T-cell (primary cell): ENCODE measurements at regions of chr10 and their contacts with region 1.

Region 1: GRCh38 chr10:30639946-30640786 is 10.6 kb upstream of the LYZL2 start:
- DNase-seq: peak in 4 of 35 experiments; percentile 4 to 76 (median 8)
- ATAC-seq: peak in 1 of 4 experiments; percentile 28
- H3K4me3 ChIP-seq: no peak overlapping the region
- H3K4me3 Mint-ChIP-seq: no peak overlapping the region
- H3K27ac ChIP-seq: no peak overlapping the region
- H3K27ac Mint-ChIP-seq: no peak overlapping the region
- H3K4me1 ChIP-seq: no peaks in the 10 kb centered on the region
- H3K4me1 Mint-ChIP-seq: peaks cover 0 to 3% (median 0%) of the 10 kb centered on the region in 3 donors
- H3K27me3 ChIP-seq: peaks cover 5 to 6% of the 10 kb centered on the region in 2 experiments
- H3K27me3 Mint-ChIP-seq: peaks cover 37 to 38% of the 10 kb centered on the region in 2 donors

Region 2: GRCh38 chr10:30583778-30584415 is 56.3 kb before region 1 on chr10:
- CTCF ChIA-PET with region 1: interaction called in 1 of 2 experiments, 10 read pairs
- POLR2A ChIA-PET with region 1: no interaction called
- DNase-seq: peak in 2 of 35 experiments; percentile 9 to 10
- ATAC-seq: no peak
- H3K4me3 ChIP-seq: peak overlapping the region in 1 of 2 donors; percentile 13
- H3K4me3 Mint-ChIP-seq: peak overlapping the region; percentile 51 to 72 (median 56)
- H3K27ac ChIP-seq: no peak overlapping the region
- H3K27ac Mint-ChIP-seq: no peak overlapping the region
- H3K4me1 ChIP-seq: peaks cover 0 to 8% of the 10 kb centered on the region in 2 experiments
- H3K4me1 Mint-ChIP-seq: peaks cover 5 to 10% (median 5%) of the 10 kb centered on the region in 3 donors
- H3K27me3 ChIP-seq: peaks cover 0 to 10% of the 10 kb centered on the region in 2 experiments
- H3K27me3 Mint-ChIP-seq: peaks cover 8 to 9% of the 10 kb centered on the region in 2 donors

Region 3: DNA sequence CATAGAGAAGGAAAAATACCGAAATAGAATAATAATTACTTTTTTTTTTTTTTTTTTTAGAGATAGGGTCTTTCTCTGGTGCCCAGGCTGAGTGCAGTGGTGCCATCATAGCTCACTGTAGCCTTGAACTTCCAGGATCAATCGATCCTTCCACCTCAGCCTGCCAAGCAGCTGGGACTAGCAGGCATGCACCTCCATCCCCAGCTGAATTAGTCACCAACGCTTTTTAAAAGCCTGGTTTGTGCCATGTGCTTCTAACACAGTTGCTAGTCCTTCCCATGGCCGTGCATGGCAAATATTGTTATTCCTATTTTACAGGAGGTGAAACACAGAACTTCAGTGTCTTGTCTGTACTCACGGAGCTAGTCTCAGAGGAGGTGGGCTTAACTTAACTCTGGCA is 33.9 kb before region 1 on chr10:
- CTCF ChIA-PET with region 1: no interaction called
- POLR2A ChIA-PET with region 1: no interaction called
- DNase-seq: no peak
- ATAC-seq: no peak
- H3K4me3 ChIP-seq: no peak overlapping the region
- H3K4me3 Mint-ChIP-seq: no peak overlapping the region
- H3K27ac ChIP-seq: no peak overlapping the region
- H3K27ac Mint-ChIP-seq: no peak overlapping the region
- H3K4me1 ChIP-seq: no peaks in the 10 kb centered on the region
- H3K4me1 Mint-ChIP-seq: no peaks in the 10 kb centered on the region
- H3K27me3 ChIP-seq: peaks cover 0 to 23% of the 10 kb centered on the region in 2 experiments
- H3K27me3 Mint-ChIP-seq: peaks cover 26 to 41% of the 10 kb centered on the region in 2 donors

Region 4: DNA sequence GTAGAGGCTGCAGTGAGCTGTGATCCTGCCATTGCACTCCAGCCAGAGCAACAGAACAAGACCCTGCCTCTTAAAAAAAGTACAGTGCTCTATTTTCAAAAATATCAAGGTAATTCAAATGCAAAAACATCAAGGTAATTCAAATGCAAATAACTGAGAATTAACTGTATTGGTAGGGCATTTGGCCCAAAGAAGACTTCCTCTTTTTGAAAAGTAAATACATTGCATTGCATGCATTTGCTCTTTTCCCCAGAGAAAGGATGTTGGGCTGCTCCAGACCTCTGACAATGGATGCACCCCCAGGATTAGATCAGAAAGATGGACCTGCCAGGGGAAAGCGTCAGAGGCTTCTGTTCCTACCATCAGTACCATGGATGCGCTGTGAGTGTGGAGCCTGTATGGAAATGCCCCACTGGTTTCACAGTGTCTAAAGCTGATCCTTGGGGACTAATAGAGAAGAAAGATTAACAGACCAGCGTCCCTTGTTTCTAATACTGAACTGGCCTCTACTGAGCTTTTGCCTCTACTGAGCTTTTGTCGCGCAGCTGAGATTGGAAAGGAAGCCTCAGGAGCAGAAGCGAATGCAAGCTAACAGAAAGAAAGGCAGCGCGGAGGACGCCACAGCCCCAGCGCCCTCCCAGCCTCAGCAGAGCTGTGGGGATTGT is 82.9 kb after region 1 on chr10:
- CTCF ChIA-PET with region 1: no interaction called
- POLR2A ChIA-PET with region 1: no interaction called
- DNase-seq: no peak
- ATAC-seq: no peak
- H3K4me3 ChIP-seq: no peak overlapping the region
- H3K4me3 Mint-ChIP-seq: no peak overlapping the region
- H3K27ac ChIP-seq: no peak overlapping the region
- H3K27ac Mint-ChIP-seq: no peak overlapping the region
- H3K4me1 ChIP-seq: peaks cover 0 to 12% of the 10 kb centered on the region in 2 experiments
- H3K4me1 Mint-ChIP-seq: peaks cover 0 to 2% (median 0%) of the 10 kb centered on the region in 3 donors
- H3K27me3 ChIP-seq: peaks cover 0 to 4% of the 10 kb centered on the region in 2 experiments
- H3K27me3 Mint-ChIP-seq: peaks cover 0 to 6% of the 10 kb centered on the region in 2 donors